ENCODE measurements at regions of chr9 and their contacts with region 1.

Region 1: DNA sequence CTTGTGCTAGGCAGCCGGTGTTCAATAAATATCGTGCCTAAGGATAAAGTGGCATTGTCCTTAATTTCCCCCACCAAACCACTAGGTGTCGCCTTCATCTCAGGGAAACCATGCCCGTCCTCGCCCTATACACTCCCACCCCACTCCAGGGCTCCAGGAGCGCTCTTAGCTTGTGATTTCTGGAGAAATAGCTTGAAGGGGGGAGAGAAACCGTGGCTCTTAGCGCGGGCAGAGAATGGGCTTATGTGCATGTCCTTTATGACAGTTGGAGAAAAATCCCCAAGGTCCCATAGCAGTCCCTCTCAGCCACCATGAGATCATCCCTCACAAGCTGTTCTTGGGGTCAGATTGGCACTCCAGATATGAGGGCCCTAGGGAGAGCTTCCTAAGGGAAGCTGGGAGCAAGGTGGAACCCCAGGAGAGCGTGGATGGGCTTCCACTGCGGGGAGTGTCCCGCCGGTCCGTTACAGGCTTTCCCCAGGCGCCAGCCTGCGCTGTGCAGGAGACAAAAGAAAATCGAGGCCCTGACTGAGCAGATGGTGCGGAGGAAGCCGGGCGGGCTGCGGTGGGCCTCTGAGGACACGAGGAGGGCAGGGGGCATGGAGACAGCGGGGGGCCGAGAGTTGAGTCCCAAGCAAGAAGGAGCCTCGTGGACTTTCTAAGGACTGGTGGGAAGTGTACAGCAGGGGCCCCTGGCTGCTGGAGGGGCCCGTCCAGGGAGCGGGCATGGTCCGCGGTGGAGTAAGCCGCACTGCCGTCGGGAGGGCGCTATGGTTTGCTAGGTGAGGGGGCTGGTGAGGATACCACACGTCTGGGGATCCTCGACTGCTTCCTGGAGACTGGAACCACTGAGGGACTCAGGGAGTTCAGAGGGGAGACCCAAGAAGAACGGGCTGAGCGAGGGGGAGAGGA is 750 bp upstream of the NPR2 start:
- DNase-seq: peak; percentile 82
- ATAC-seq: peak; percentile 93

Region 2: GRCh38 chr9:35882263-35882848 is 91.7 kb after region 1 on chr9:
- intact Hi-C with region 1: loop called (anchors 5 kb)
- DNase-seq: peak; percentile 92
- ATAC-seq: peak; percentile 97

Region 3: DNA sequence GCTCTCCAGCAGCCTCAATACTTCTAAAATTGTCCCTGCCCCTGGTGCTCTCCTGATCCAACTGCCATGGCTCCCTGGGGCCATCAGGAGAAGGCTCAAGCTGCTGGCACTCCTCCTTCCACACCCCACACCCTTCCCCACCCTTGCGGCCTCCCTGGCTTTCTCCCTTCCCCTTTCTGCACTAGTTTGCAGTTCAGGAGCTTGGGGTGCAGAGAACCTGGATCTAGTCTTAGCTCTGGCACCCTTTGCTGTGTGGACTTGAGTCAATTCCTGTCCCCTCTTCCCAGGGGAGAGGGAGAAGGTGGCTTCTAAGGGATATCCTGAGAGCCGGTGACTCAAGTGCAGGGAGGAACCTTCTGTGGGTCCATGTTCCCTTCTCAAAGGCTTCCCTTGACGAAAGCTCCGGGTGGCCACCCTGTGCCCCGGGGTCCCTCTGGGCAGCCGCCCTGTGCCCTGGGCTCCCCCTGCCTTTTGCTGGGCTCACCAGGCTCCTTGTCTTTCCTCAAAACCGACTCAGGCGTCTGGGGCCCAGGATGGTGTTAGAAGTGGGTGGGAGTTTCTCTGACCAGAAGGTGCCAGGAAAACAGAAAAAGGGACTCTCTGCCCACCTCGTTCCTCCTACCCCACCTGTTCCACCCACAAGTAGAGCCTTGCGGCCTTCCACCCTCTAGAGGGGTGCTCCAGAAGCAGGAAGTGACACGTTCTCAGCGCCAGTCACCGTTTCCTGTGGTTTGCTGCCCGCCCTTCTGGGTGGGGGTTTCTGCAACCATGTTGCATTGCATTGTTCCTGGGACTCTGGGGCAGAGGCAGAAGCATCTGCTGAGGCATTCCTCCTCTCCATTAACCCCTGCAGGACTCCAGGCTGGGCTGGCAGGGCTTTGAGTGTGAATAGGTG is 360.9 kb after region 1 on chr9:
- intact Hi-C with region 1: no loop called
- DNase-seq: no peak
- ATAC-seq: peak; percentile 29